Upper lobe of right lung (tissue), 1 donor: ENCODE measurements at regions of chr4 and their contacts with region 1.

Region 1: DNA sequence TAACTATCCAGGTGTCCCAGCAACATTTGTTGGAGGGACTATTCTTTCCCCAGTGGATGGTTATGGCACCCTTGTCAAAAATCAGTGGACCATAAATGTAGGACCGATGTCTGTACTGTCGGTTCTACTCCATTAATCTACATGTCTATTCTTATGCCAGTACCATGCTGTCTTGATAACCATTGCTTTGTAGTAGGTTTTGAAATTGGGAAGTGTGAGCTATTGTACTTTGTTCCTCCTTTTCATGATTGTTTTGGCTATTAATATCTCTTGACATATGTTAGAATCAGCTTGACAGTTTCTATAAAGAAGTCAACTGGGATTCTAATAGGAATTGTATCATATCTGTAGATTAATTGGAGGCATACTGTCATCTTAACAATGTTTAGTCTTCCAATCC is 112.7 kb downstream of the HNRNPD start:
- DNase-seq: no peak
- ATAC-seq: no peak
- H3K4me3 ChIP-seq: no peak overlapping the region
- H3K27ac ChIP-seq: no peak overlapping the region
- H3K4me1 ChIP-seq: no peaks in the 10 kb centered on the region
- H3K27me3 ChIP-seq: no peaks in the 10 kb centered on the region
- CTCF ChIP-seq: no peak

Region 2: GRCh38 chr4:82230306-82230705 is 30.8 kb before region 1 on chr4:
- intact Hi-C with region 1: loop called (anchors 2 kb)
- DNase-seq: no peak
- ATAC-seq: peak; percentile 70
- H3K4me3 ChIP-seq: no peak overlapping the region
- H3K27ac ChIP-seq: no peak overlapping the region
- H3K4me1 ChIP-seq: no peaks in the 10 kb centered on the region
- H3K27me3 ChIP-seq: no peaks in the 10 kb centered on the region
- CTCF ChIP-seq: no peak